ENCODE measurements at regions of chr1 and their contacts with region 1.

Region 1: DNA sequence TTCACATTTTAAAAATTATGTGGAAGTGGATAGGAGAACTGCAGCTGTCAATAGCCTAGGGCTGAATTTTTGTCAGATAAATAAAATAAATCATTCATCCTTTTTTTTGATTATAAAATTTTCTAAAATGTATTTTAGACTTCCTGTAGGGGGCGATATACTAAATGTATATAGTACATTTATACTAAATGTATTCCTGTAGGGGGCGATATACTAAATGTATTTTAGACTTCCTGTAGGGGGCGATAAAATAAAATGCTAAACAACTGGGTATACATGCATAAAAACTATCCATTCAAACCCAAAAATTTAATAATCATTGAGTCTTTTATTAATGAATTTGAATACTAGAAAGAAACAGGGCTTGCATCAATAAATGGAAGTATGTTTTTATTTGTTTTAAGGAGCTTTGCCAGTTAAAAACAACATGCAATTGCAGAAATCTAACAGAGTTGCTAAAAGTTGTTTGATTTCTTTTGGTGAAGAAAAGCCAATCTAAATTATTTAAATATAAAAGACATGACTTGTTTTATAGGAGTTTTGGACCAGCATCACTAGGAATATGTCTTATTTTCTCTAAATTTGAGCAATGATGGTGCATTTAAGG is 31.4 kb downstream of the CLCA1 start:
- DNase-seq: no peak
- ATAC-seq: no peak

Region 2: DNA sequence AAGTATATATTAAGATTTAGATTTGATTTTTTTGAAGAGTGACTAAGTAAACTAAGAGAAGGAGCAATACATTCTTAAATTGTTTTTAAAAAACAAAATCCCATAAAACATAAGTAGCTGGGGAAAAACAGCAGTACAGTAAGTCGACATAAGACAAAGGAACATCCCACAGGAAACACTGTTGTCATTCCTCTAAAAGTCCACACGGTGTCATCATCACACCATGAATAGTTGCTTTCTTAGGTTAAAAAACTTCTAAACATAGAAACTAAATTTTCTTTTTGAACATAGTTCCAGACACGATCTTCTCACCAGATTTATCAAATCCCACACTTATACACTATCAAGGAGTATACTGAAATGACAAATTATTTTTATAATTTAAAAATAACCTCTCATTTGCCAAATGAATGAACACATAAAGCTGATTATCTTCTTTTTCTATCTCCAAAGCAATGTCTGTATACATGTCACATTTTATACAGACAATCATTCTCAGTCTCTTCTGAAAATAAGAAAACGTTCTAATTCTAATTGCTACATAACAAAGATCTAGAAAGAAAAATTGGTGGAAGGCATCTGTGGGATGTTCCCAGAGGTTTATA is 119.7 kb before region 1 on chr1:
- intact Hi-C with region 1: loop called (anchors 10 kb)
- DNase-seq: no peak
- ATAC-seq: peak; percentile 63

Region 3: DNA sequence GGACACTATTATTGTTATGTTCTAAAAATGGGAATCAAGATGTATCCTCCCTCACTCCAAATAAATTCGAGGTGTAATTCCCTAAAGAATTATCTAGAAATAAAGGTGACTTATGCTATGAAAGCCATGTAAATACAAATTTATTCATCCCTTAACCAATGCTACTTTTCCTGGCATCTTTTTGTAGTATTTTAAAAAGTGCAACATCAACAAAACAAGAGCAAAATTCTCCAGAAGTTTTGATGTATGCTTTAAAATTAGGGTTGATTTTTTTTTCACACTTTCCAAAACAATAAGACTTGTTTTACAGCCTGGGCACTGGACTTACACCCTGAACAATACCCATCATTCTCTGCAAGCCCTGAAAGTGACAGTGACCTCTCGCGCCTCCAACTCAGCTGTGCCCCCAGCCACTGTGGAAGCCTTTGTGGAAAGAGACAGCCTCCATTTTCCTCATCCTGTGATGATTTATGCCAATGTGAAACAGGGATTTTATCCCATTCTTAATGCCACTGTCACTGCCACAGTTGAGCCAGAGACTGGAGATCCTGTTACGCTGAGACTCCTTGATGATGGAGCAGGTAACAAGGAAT is 52.8 kb before region 1 on chr1:
- intact Hi-C with region 1: no loop called
- DNase-seq: no peak
- ATAC-seq: no peak

Region 4: DNA sequence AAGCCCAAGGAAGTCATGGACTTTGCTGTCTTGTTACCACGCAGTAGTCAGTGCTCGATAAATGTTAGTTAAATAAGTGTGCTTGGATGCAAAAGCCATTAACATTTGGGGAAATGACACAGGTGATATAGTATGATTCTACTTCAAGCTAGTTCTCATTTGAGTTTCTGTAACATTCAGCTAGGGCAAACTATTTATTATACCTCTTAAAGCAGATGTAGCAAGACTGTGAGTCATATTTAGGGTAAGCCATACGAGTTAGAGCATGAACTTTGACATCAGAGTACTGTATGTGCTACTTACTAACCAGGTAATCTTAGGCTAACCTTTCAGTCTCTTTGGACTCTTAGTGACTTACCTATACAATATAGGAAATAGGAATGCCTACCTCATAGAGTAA is 67.8 kb after region 1 on chr1:
- intact Hi-C with region 1: no loop called
- DNase-seq: no peak
- ATAC-seq: no peak

Region 5: GRCh38 chr1:86741947-86742572 is 242.0 kb after region 1 on chr1:
- intact Hi-C with region 1: loop called (anchors 10 kb)
- DNase-seq: no peak
- ATAC-seq: no peak

Measured in left ventricle myocardium superior (tissue), 1 donor.